ENCODE measurements at regions of chr5 and their contacts with region 1.

Region 1: GRCh38 chr5:157142317-157143126 is at the start of gene MED7:
- DNase-seq: peak; percentile 80 to 99 (median 90)
- ATAC-seq: peak; percentile 95
- H3K4me3 ChIP-seq: peak within 1 kb of the TSS; percentile 93 to 99
- H3K4me3 Mint-ChIP-seq: peak within 1 kb of the TSS; percentile 93
- H3K27ac ChIP-seq: peak within 1 kb of the TSS; percentile 90 to 96
- H3K27ac Mint-ChIP-seq: peak within 1 kb of the TSS; percentile 97
- H3K4me1 ChIP-seq: peaks cover 21% of the 10 kb centered on the region
- H3K4me1 Mint-ChIP-seq: peaks cover 40% of the 10 kb centered on the region
- H3K27me3 ChIP-seq: no peaks in the 10 kb centered on the region
- H3K27me3 Mint-ChIP-seq: no peaks in the 10 kb centered on the region
- CTCF ChIP-seq: no peak
- total RNA-seq, gene MED7: 5.4 to 5.9 TPM

Region 2: GRCh38 chr5:156675395-156675794 is 467.1 kb before region 1 on chr5:
- CTCF ChIA-PET with region 1: no interaction called
- POLR2A ChIA-PET with region 1: no interaction called
- intact Hi-C with region 1: no loop called
- DNase-seq: no peak
- ATAC-seq: no peak
- H3K4me3 ChIP-seq: no peak overlapping the region
- H3K4me3 Mint-ChIP-seq: no peak overlapping the region
- H3K27ac ChIP-seq: no peak overlapping the region
- H3K27ac Mint-ChIP-seq: no peak overlapping the region
- H3K4me1 ChIP-seq: no peaks in the 10 kb centered on the region
- H3K4me1 Mint-ChIP-seq: no peaks in the 10 kb centered on the region
- H3K27me3 ChIP-seq: no peaks in the 10 kb centered on the region
- H3K27me3 Mint-ChIP-seq: no peaks in the 10 kb centered on the region
- CTCF ChIP-seq: no peak

Region 3: DNA sequence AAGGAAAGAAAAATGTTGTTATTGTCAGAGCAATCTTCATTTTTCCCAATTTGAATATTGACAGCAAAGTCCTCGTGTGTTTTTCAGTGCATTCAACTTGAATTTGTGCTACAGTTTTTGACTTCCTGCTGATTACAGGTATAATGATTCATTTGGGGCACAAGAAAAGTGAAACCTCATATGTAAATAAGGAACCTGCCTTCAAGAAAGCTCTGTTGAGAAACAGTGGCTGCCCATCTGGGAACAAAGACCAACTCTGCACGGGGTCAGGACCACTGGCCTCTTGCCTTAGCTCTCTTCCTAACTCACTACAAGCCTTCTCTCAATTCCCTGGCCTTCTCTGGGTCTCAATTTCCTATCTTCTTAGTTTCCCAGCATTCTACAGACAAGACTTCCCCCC is 200.5 kb before region 1 on chr5:
- CTCF ChIA-PET with region 1: no interaction called
- POLR2A ChIA-PET with region 1: no interaction called
- intact Hi-C with region 1: no loop called
- DNase-seq: peak in 1 of 9 experiments; percentile 20
- ATAC-seq: no peak
- H3K4me3 ChIP-seq: no peak overlapping the region
- H3K4me3 Mint-ChIP-seq: peak overlapping the region; percentile 50
- H3K27ac ChIP-seq: no peak overlapping the region
- H3K27ac Mint-ChIP-seq: peak overlapping the region; percentile 92
- H3K4me1 ChIP-seq: peaks cover 13% of the 10 kb centered on the region
- H3K4me1 Mint-ChIP-seq: peaks cover 22% of the 10 kb centered on the region
- H3K27me3 ChIP-seq: no peaks in the 10 kb centered on the region
- H3K27me3 Mint-ChIP-seq: no peaks in the 10 kb centered on the region
- CTCF ChIP-seq: no peak

Region 4: DNA sequence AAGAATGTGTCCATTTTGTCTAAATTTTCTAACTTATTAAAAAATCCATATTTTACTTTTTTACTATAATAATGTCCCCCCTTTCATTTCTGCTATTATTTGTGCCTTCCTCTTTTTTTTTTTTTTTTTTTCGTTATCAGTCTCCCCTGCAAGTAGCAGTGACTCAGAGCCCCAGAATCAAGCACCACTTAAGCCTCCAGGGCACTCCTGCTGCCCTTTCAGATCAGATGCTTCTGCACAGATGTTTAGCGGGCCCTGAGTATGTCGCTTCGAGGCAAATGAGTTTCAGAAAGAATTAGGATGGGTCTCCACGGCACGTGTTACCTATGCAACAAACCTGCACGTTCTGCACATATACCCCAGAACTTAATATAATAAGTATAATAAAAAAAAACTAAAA is 11.6 kb before region 1 on chr5:
- CTCF ChIA-PET with region 1: interaction called, 4 read pairs
- POLR2A ChIA-PET with region 1: interaction called, 17 read pairs
- intact Hi-C with region 1: no loop called
- DNase-seq: no peak
- ATAC-seq: no peak
- H3K4me3 ChIP-seq: no peak overlapping the region
- H3K4me3 Mint-ChIP-seq: no peak overlapping the region
- H3K27ac ChIP-seq: no peak overlapping the region
- H3K27ac Mint-ChIP-seq: no peak overlapping the region
- H3K4me1 ChIP-seq: no peaks in the 10 kb centered on the region
- H3K4me1 Mint-ChIP-seq: peaks cover 26% of the 10 kb centered on the region
- H3K27me3 ChIP-seq: no peaks in the 10 kb centered on the region
- H3K27me3 Mint-ChIP-seq: no peaks in the 10 kb centered on the region
- CTCF ChIP-seq: no peak

Region 5: GRCh38 chr5:157189223-157189622 is 46.7 kb after region 1 on chr5:
- CTCF ChIA-PET with region 1: interaction called, 21 read pairs
- POLR2A ChIA-PET with region 1: interaction called, 33 read pairs
- intact Hi-C with region 1: no loop called
- DNase-seq: no peak
- ATAC-seq: no peak
- H3K4me3 ChIP-seq: peak overlapping the region; percentile 18 to 40
- H3K4me3 Mint-ChIP-seq: peak overlapping the region; percentile 85
- H3K27ac ChIP-seq: peak overlapping the region; percentile 34 to 83
- H3K27ac Mint-ChIP-seq: peak overlapping the region; percentile 93
- H3K4me1 ChIP-seq: peaks cover 86% of the 10 kb centered on the region
- H3K4me1 Mint-ChIP-seq: peaks cover 86% of the 10 kb centered on the region
- H3K27me3 ChIP-seq: no peaks in the 10 kb centered on the region
- H3K27me3 Mint-ChIP-seq: no peaks in the 10 kb centered on the region
- CTCF ChIP-seq: no peak

Region 6: GRCh38 chr5:157219491-157220271 is 77.2 kb after region 1 on chr5:
- CTCF ChIA-PET with region 1: interaction called, 18 read pairs
- POLR2A ChIA-PET with region 1: interaction called, 19 read pairs
- intact Hi-C with region 1: loop called in 1 of 2 experiments (anchors 5 kb)
- DNase-seq: no peak
- ATAC-seq: no peak
- H3K4me3 ChIP-seq: no peak overlapping the region
- H3K4me3 Mint-ChIP-seq: peak overlapping the region; percentile 40
- H3K27ac ChIP-seq: peak overlapping the region in 1 of 2 experiments; percentile 76
- H3K27ac Mint-ChIP-seq: peak overlapping the region; percentile 91
- H3K4me1 ChIP-seq: peaks cover 85% of the 10 kb centered on the region
- H3K4me1 Mint-ChIP-seq: peaks cover 87% of the 10 kb centered on the region
- H3K27me3 ChIP-seq: no peaks in the 10 kb centered on the region
- H3K27me3 Mint-ChIP-seq: no peaks in the 10 kb centered on the region
- CTCF ChIP-seq: no peak

Region 7: DNA sequence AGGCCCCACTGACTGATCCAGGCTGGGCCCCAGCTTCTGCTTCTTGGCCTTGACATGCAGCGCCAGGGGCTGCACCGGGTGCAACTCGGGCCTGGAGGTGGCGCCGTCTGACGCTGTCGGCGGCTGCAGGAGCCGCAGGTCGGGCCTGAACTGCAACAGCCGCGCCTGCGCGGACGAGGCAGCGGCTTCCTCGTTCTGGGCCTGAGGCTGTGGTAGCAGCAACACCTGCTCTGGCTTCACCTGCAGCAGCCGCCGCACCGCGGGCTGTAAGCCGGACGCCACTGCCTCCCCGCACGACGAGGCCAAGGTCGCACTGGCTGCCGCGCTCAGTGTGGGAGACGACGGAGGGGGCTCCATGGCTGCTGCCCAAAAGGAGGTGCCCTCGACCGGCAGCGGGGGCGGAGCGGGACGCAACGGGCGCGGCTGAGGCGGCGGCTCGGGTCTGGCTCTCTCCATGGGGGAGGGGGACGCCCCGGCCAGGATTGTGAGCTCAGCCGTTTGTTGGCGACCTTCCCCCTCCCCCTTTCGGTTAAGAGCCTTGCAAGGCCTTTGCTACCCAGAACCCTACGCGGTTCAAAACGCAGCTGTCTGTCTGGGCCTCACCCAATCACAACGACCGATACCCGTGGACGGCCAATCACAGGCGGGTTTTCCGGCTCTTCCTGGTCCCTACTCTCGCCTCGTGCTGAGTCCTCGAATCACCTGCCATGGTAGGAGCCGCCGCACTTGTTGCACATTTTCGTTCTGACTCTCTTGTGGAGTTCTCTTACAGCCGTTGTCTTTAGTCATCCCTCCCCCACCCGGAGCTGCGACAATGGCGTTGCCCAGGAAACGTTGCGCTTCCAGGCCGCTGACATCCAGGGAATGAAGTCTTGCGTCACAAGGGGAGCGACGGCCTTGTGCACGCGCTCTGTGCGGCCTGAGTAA is 509.4 kb after region 1 on chr5 and contains the start of gene SOX30:
- CTCF ChIA-PET with region 1: no interaction called
- POLR2A ChIA-PET with region 1: no interaction called
- intact Hi-C with region 1: loop called in 1 of 2 experiments (anchors 5 kb)
- DNase-seq: peak; percentile 65 to 89 (median 78)
- ATAC-seq: peak; percentile 98
- H3K4me3 ChIP-seq: peak within 1 kb of the TSS; percentile 42 to 63
- H3K4me3 Mint-ChIP-seq: peak within 1 kb of the TSS; percentile 77
- H3K27ac ChIP-seq: peak within 1 kb of the TSS; percentile 7 to 22
- H3K27ac Mint-ChIP-seq: peak within 1 kb of the TSS; percentile 81
- H3K4me1 ChIP-seq: no peaks in the 10 kb centered on the region
- H3K4me1 Mint-ChIP-seq: peaks cover 16% of the 10 kb centered on the region
- H3K27me3 ChIP-seq: no peaks in the 10 kb centered on the region
- H3K27me3 Mint-ChIP-seq: no peaks in the 10 kb centered on the region
- CTCF ChIP-seq: no peak
- total RNA-seq, gene SOX30: not detected